K562 (cell line): ENCODE measurements at regions of chr7 and their contacts with region 1.

Region 1: DNA sequence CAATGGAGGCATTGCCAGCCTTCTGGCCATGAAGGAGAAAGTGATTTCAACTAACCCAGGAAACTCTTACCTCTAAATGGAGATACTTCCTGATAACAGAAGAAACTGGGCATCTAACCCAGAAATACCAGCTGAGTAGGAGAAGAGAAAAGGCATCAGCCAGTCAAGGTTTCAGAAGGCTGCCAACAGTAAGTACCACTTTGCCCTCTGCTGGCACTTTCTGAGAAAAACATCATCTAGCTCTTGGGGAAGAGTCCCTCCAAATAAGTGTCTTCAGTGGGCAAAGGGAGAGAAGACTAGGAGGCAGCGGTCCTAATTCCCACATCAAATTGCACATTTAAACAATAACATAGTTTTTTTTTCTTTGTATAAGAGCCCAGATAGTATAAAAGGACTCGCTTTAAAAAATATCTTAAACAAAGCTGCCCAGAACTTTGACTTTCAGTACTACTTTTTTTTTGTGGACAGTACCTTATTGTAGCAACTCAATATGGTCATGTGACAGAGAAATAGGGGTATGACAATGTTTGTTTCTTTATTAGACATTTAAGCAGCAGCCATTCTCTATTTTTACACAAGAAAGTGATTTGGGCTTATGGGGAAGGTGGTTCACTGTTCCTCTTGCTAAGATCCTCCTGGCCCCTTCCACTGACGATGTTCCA is 157.3 kb downstream of the CTTNBP2 start:
- DNase-seq: peak in 3 of 4 experiments; percentile 29 to 38 (median 31)
- ATAC-seq: peak; percentile 75
- H3K4me3 ChIP-seq: no peak overlapping the region
- H3K27ac ChIP-seq: no peak overlapping the region
- H3K4me1 ChIP-seq: no peaks in the 10 kb centered on the region; a peak in 1 of 5 replicates
- H3K27me3 ChIP-seq: peaks cover 0 to 3% of the 10 kb centered on the region in 2 experiments; a peak in 2 of 5 replicates
- CTCF ChIP-seq: peak; percentile 38 to 63 (median 47)
- EP300 ChIP-seq: no peak
- POLR2A ChIP-seq: no peak
- RAD21 ChIP-seq: peak; percentile 59 to 60

Region 2: DNA sequence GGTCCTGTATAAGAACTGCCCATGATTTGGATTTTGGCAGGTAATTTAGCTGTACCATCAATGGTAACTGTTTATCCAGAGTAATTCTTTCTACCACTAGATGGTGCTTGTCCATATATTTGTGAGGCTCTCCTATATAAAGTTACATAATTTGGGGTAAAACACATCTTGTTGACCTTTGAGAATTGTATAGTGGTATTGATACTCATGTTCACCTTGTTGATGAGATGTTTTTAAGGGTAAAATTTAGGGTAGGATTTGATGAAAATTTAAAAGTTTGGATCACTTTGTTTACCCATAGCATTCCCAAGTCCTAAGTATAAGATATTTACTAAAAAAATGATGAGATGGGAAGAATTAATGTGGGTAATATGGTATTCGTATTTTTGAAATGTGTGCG is 731.0 kb before region 1 on chr7:
- CTCF ChIA-PET with region 1: no interaction called
- POLR2A ChIA-PET with region 1: no interaction called
- in situ Hi-C with region 1: no loop called
- intact Hi-C with region 1: no loop called
- DNase-seq: peak; percentile 58 to 69 (median 66)
- ATAC-seq: peak; percentile 83
- H3K4me3 ChIP-seq: no peak overlapping the region
- H3K27ac ChIP-seq: no peak overlapping the region
- H3K4me1 ChIP-seq: no peaks in the 10 kb centered on the region; a peak in 1 of 5 replicates
- H3K27me3 ChIP-seq: no peaks in the 10 kb centered on the region
- CTCF ChIP-seq: peak; percentile 67 to 86 (median 71)
- EP300 ChIP-seq: no peak
- POLR2A ChIP-seq: no peak
- RAD21 ChIP-seq: peak; percentile 86 to 90

Region 3: DNA sequence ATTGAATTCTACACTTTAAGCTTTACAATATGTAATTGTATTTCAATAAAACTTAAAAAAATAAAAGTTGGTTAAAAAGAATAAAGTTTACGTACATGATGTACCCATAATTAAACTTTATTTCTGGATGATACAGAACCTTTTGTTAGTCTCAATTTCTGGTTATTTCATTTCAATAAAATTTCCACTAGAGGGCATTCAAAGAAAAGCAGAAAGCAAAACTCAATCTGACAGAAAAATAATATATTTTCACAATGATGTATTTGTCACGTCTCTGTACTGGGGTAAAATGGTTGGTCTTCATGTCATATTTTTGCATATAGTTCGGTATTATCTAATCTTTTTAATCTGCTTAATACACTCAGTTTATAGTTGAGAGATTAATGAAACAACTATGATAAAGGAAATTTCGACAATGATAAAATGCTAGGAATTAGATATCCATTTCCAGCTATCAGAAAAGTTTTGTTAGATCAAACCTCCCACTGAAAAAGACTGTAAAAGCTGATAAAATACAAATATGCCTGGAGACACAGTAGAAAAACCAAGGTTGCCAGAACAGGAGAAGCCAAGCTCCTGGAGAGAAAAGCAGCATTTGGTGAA is 316.0 kb before region 1 on chr7:
- CTCF ChIA-PET with region 1: no interaction called
- POLR2A ChIA-PET with region 1: no interaction called
- in situ Hi-C with region 1: no loop called
- intact Hi-C with region 1: loop called (anchors 10 kb)
- DNase-seq: peak in 1 of 4 experiments; percentile 17
- ATAC-seq: peak; percentile 45; the same call in 1 of the 3 replicates
- H3K4me3 ChIP-seq: no peak overlapping the region
- H3K27ac ChIP-seq: no peak overlapping the region
- H3K4me1 ChIP-seq: no peaks in the 10 kb centered on the region
- H3K27me3 ChIP-seq: no peaks in the 10 kb centered on the region
- CTCF ChIP-seq: peak in 2 of 3 experiments; percentile 21 to 70; a peak in 3 of 6 replicates
- EP300 ChIP-seq: no peak
- POLR2A ChIP-seq: no peak
- RAD21 ChIP-seq: peak; percentile 75